Vagina (tissue), 2 donors: ENCODE measurements at regions of chr21 and their contacts with region 1.

Region 1: GRCh38 chr21:42566863-42567545 is 53.4 kb downstream of the SLC37A1 start:
- DNase-seq: no peak
- H3K4me3 ChIP-seq: no peak overlapping the region
- H3K27ac ChIP-seq: no peak overlapping the region
- H3K4me1 ChIP-seq: no peaks in the 10 kb centered on the region
- H3K27me3 ChIP-seq: no peaks in the 10 kb centered on the region
- CTCF ChIP-seq: no peak
- POLR2A ChIP-seq: no peak

Region 2: GRCh38 chr21:42503711-42504110 is 63.3 kb before region 1 on chr21:
- intact Hi-C with region 1: no loop called
- DNase-seq: no peak
- H3K4me3 ChIP-seq: no peak overlapping the region
- H3K27ac ChIP-seq: no peak overlapping the region
- H3K4me1 ChIP-seq: no peaks in the 10 kb centered on the region
- H3K27me3 ChIP-seq: no peaks in the 10 kb centered on the region
- CTCF ChIP-seq: no peak
- POLR2A ChIP-seq: no peak

Region 3: GRCh38 chr21:42513985-42514882 is 52.8 kb before region 1 on chr21:
- intact Hi-C with region 1: loop called (anchors 2 kb)
- DNase-seq: peak in 1 of 2 donors; percentile 87
- H3K4me3 ChIP-seq: peak overlapping the region; percentile 66 to 76
- H3K27ac ChIP-seq: peak overlapping the region; percentile 69
- H3K4me1 ChIP-seq: peaks cover 36% of the 10 kb centered on the region
- H3K27me3 ChIP-seq: no peaks in the 10 kb centered on the region
- CTCF ChIP-seq: no peak
- POLR2A ChIP-seq: no peak